GM12878 (cell line): ENCODE measurements at regions of chr22 and their contacts with region 1.

Region 1: DNA sequence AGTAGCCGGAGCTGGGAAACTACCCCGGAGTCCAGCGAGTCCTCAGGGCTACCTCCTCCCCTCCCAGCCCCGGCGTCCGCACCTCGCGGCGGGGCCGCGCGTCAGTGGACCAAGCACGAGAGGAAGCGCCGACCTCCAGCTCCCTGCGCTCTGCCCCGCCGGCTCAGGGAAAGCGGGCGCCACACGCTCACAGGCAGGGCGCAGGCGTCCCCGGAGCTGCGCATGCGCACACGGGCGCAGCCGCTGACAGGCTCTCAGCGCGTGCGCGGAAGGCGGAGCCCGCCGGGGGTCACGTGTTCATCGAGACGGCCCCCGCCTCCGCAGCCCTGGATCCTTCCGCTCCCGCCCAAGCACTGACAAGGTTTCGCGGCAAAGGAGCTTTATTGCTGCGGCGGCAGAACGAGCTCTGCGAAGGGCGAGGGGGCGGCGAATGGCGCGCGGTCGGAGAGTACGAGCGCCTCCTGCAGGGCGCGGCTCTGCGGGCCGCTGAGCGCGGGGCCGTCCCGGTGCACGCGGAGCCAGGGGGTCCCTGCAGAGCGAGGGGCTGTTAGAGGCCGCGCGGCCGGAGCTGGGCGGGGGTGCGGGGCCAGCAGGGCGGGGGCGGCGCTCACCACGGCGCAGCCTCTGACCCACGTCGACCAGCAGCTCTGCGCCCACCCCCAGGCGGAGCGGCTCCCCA is at the start of gene SCO2:
- DNase-seq: peak; percentile 89
- ATAC-seq: peak; percentile 54
- H3K4me3 ChIP-seq: peak within 1 kb of the TSS; percentile 74
- H3K27ac ChIP-seq: peak within 1 kb of the TSS; percentile 94
- H3K4me1 ChIP-seq: peaks cover 16% of the 10 kb centered on the region
- H3K27me3 ChIP-seq: no peaks in the 10 kb centered on the region
- CTCF ChIP-seq: peak; percentile 32 to 45 (median 42); a peak in 5 of 6 replicates
- EP300 ChIP-seq: no peak; a peak in 1 of 4 replicates
- POLR2A ChIP-seq: no peak
- RAD21 ChIP-seq: peak; percentile 45; the same call in 1 of the 2 replicates
- polyA plus RNA-seq, gene SCO2: 1.0 TPM in 1 of 2 experiments, not detected in the other

Region 2: DNA sequence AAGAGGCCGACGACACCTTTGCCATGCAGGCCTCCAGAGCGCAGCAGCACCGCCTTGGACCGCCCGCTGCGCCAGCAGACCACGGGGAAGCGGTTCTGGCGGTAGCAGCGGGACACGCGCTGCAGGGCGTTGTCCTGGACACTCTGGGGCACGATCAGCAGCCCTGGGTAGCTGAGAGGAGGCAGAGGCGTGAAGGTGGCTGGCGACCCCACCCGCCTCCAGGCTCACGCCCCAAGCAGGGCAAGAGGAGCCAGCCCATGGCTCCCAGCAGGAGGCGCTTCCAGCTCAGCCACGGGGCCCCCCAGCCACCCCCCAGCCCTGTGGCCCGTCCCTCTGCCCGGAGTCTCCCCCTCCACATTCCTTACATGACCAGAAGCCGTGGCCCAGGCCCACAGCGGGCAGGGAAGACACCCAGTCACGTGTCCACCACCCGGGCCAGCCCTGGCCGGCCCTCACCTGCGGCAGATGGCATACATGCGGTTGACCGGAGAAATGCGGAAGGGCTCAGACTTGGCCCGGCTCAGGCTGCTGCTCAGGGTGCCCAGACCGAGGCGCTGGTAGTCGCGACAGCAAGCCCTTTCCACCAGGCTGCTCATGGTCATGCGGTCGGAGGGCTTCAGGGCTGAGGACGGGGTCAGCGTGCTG is 65.9 kb before region 1 on chr22:
- CTCF ChIA-PET with region 1: no interaction called
- POLR2A ChIA-PET with region 1: no interaction called
- RAD21 ChIA-PET with region 1: no interaction called
- SMC1A ChIA-PET with region 1: no interaction called
- in situ Hi-C with region 1: no loop called
- intact Hi-C with region 1: no loop called
- DNase-seq: no peak
- ATAC-seq: peak; percentile 24; the same call in 1 of the 3 replicates
- H3K4me3 ChIP-seq: no peak overlapping the region
- H3K27ac ChIP-seq: no peak overlapping the region
- H3K4me1 ChIP-seq: no peaks in the 10 kb centered on the region
- H3K27me3 ChIP-seq: no peaks in the 10 kb centered on the region
- CTCF ChIP-seq: 0 out of 6 replicates have a peak, but pooled peaks of 1 of the 3 experiments have one; percentile 9
- EP300 ChIP-seq: no peak
- POLR2A ChIP-seq: peak; percentile 3
- RAD21 ChIP-seq: 0 out of 2 replicates have a peak, but pooled peaks have one; percentile 4

Region 3: DNA sequence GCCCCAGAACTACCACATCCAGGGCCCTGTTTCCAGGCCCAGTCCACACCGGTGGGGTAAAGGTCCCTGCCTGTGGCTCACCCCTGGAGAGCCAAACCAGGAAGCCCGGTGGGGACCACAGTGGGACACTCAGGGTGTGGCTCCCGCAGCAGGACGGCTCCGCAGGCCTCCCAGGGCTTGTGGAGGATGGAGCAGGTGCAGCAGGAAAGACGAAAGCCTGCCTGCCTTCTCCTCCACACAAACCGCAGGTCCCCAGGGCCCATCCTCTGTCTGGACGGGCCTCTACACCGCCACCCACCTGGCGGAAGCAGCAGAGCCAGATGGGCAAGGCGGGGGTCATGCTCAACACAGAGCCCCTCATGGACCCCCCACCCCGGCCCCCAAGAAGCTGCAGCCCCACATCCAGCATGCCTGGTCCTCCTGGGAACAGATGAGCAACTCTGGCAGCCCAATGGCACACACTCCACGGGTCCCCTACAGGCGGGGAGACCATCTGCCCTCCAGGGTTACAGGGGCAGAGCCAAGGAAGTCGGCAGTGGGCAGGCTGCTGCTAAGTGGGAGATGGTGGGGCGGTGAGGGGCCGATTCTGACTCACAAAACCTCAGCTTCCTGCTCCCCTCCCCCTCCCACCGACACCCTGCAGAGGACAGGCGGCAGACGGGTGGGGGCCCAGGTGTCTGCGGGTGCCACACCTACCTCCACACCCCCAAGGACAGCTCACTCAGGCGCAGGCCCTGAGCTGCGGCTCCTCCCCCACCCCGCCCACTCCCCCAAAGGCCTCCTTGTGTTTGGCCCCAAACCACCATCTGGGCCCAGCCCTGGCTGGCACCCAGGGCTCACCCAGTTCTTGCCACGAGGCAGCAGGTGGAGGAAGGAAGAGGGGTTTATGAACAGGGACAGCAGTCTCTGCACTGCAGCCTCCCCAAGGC is 55.9 kb before region 1 on chr22:
- CTCF ChIA-PET with region 1: interaction called, 14 read pairs
- POLR2A ChIA-PET with region 1: interaction called, 10 read pairs
- RAD21 ChIA-PET with region 1: interaction called, 8 read pairs
- SMC1A ChIA-PET with region 1: interaction called, 5 read pairs
- in situ Hi-C with region 1: no loop called
- intact Hi-C with region 1: no loop called
- DNase-seq: peak; percentile 87
- ATAC-seq: peak; percentile 81
- H3K4me3 ChIP-seq: peak overlapping the region; percentile 56
- H3K27ac ChIP-seq: peak overlapping the region; percentile 92
- H3K4me1 ChIP-seq: peaks cover 48% of the 10 kb centered on the region
- H3K27me3 ChIP-seq: no peaks in the 10 kb centered on the region
- CTCF ChIP-seq: peak in 1 of 3 experiments; percentile 13; a peak in 2 of 6 replicates
- EP300 ChIP-seq: peak; percentile 47 to 63; a peak in 3 of 4 replicates
- POLR2A ChIP-seq: peak; percentile 69
- RAD21 ChIP-seq: no peak

Region 4: DNA sequence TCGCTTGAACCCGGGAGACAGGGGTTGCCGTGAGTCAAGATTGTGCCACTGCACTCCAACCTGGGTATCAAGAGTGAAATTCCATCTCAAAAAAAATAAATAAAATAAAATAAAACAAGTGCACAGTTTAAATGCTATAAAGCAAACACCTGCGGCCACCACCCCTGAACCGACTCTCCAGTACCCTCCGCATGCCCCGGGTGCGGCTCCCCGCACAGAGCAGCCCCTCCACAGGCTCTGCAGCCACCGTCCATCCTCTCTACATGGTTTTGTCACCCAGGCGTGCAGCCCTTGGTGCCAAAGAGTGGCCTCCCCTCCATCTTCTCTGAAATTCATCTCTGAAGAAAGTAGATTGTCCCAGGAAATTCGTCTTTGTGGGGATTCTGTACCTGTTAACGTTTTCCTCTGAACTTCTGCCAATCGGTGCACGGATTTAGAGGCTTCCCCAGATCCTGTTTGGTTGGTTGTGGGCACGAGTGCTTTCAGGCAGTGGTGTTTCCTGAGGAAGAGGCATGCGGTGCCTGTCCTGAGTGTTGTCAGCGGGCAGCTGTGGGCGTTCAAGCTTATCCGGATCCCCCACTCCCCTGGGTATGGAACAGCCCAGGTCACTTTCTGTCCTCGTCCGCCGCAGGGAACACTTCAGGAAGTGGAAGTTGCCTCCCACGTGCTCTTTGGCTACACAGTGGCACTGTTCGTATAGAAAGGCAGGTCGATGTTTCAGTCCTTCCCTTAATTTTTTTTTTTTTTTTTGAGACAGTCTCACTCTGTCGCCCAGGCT is 34.8 kb before region 1 on chr22:
- CTCF ChIA-PET with region 1: no interaction called
- POLR2A ChIA-PET with region 1: no interaction called
- RAD21 ChIA-PET with region 1: no interaction called
- SMC1A ChIA-PET with region 1: no interaction called
- in situ Hi-C with region 1: no loop called
- intact Hi-C with region 1: no loop called
- DNase-seq: no peak
- ATAC-seq: peak; percentile 38
- H3K4me3 ChIP-seq: no peak overlapping the region
- H3K27ac ChIP-seq: no peak overlapping the region
- H3K4me1 ChIP-seq: peaks cover 5% of the 10 kb centered on the region
- H3K27me3 ChIP-seq: no peaks in the 10 kb centered on the region
- CTCF ChIP-seq: no peak
- EP300 ChIP-seq: no peak
- POLR2A ChIP-seq: no peak
- RAD21 ChIP-seq: no peak

Region 5: DNA sequence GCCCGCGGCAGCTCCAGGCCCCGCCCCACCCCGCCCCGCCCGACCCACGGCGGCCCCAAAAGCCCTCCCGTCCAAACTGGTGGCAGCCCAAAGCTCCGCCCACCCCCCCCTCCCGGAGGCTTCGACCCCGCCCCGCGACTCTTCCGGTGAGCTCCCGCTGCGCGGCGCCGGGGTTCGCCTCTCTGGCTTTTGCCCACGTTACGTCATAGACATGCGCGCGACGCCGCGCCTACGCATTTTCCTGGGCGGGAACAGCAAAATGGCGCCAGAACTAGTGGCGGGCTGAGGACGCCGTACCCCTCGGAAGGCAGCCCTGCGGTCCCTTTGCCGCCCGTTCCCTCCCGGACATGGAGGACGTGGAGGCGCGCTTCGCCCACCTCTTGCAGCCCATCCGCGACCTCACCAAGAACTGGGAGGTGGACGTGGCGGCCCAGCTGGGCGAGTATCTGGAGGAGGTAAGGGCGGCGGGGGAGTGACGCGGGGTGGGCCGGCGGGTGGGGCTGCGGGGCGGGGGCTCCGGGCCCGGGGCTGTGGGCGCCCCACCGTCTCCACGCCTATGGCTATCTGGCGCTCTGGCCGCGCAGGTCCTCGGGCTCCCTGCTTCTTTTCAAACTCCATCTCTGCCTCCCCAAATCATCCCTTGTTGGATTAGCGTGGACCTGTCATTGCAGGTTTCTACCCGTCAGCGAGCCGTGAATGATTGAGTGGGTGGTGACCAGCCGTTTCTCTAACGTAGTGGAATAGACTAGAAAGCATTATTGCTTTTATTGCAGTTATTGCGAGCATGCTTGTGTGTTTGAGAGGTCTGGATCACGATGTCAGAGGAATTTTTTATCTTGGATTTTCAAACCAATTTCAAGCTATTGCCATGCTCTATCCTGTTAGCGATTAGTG is 17.3 kb before region 1 on chr22 and contains the start of gene NCAPH2:
- CTCF ChIA-PET with region 1: interaction called, 38 read pairs
- POLR2A ChIA-PET with region 1: interaction called, 84 read pairs
- RAD21 ChIA-PET with region 1: interaction called, 64 read pairs
- SMC1A ChIA-PET with region 1: interaction called, 16 read pairs
- in situ Hi-C with region 1: no loop called
- intact Hi-C with region 1: no loop called
- DNase-seq: peak; percentile 83
- ATAC-seq: peak; percentile 69
- H3K4me3 ChIP-seq: peak within 1 kb of the TSS; percentile 100
- H3K27ac ChIP-seq: peak within 1 kb of the TSS; percentile 90
- H3K4me1 ChIP-seq: peaks cover 9% of the 10 kb centered on the region
- H3K27me3 ChIP-seq: no peaks in the 10 kb centered on the region
- CTCF ChIP-seq: peak in 1 of 3 experiments; percentile 33; a peak in 2 of 6 replicates
- EP300 ChIP-seq: no peak
- POLR2A ChIP-seq: peak; percentile 98
- RAD21 ChIP-seq: peak; percentile 16; the same call in 1 of the 2 replicates
- polyA plus RNA-seq, gene NCAPH2: 5.0 to 16.9 TPM

Region 6: GRCh38 chr22:50537765-50538164 is 12.2 kb after region 1 on chr22:
- CTCF ChIA-PET with region 1: interaction called, 37 read pairs
- POLR2A ChIA-PET with region 1: interaction called, 232 read pairs
- RAD21 ChIA-PET with region 1: interaction called, 106 read pairs
- SMC1A ChIA-PET with region 1: interaction called, 58 read pairs
- in situ Hi-C with region 1: no loop called
- intact Hi-C with region 1: no loop called
- DNase-seq: no peak
- ATAC-seq: no peak
- H3K4me3 ChIP-seq: peak overlapping the region; percentile 28; the same call in 1 of the 2 replicates
- H3K27ac ChIP-seq: peak overlapping the region; percentile 100
- H3K4me1 ChIP-seq: peaks cover 68% of the 10 kb centered on the region
- H3K27me3 ChIP-seq: no peaks in the 10 kb centered on the region
- CTCF ChIP-seq: no peak
- EP300 ChIP-seq: no peak
- POLR2A ChIP-seq: no peak
- RAD21 ChIP-seq: no peak

Region 7: DNA sequence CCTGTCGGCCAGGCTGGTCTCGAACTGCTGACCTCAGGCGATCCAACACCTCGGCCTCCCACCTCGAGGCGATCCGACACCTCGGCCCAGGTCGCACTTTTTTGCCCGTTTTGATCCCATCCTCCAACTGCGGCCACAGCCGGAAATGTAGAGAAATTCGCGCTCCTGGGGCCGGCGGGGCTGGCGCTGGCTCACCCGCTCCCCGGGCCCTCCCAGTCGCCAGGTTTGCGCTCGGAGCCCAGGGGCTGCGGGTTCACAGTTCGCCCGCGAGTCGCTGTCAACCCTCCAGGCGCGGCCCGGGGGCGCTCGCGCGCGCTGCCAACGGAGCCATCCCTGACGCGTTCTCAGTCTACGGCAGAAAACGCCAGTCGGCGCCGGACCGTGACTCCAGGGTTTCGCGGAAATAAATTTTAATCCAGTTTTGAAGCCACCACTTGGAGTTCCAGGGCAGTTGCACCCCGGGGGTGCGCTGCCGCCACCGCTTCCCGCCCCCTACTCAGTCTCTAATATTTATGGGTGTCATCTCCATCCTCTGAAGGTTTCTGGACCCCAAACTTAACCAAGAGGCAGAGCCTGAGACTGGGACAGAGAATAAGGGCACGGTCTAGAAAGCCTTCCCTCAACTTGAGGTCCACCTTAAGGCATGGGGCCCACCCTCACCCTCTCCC is 18.7 kb after region 1 on chr22:
- CTCF ChIA-PET with region 1: interaction called, 37 read pairs
- POLR2A ChIA-PET with region 1: interaction called, 232 read pairs
- RAD21 ChIA-PET with region 1: interaction called, 106 read pairs
- SMC1A ChIA-PET with region 1: interaction called, 58 read pairs
- in situ Hi-C with region 1: no loop called
- intact Hi-C with region 1: no loop called
- DNase-seq: no peak
- ATAC-seq: peak; percentile 43
- H3K4me3 ChIP-seq: no peak overlapping the region
- H3K27ac ChIP-seq: peak overlapping the region; percentile 45; the same call in 1 of the 2 replicates
- H3K4me1 ChIP-seq: peaks cover 46% of the 10 kb centered on the region
- H3K27me3 ChIP-seq: peaks cover 0 to 1% of the 10 kb centered on the region in 2 experiments; a peak in 1 of 4 replicates
- CTCF ChIP-seq: peak; percentile 62 to 76 (median 72)
- EP300 ChIP-seq: no peak
- POLR2A ChIP-seq: peak; percentile 38
- RAD21 ChIP-seq: peak; percentile 38; the same call in 1 of the 2 replicates

Region 8: GRCh38 chr22:50562523-50563412 is 37.2 kb after region 1 on chr22 and contains the start of gene SYCE3:
- CTCF ChIA-PET with region 1: interaction called, 21 read pairs
- POLR2A ChIA-PET with region 1: interaction called, 21 read pairs
- RAD21 ChIA-PET with region 1: interaction called, 13 read pairs
- SMC1A ChIA-PET with region 1: interaction called, 7 read pairs
- in situ Hi-C with region 1: no loop called
- intact Hi-C with region 1: loop called (anchors 5 kb)
- DNase-seq: peak; percentile 75
- ATAC-seq: peak; percentile 98
- H3K4me3 ChIP-seq: peak within 1 kb of the TSS; percentile 94
- H3K27ac ChIP-seq: no peak within 1 kb of the TSS
- H3K4me1 ChIP-seq: no peaks in the 10 kb centered on the region
- H3K27me3 ChIP-seq: peaks cover 0 to 1% of the 10 kb centered on the region in 2 experiments; a peak in 1 of 4 replicates
- CTCF ChIP-seq: peak; percentile 92 to 94 (median 92)
- EP300 ChIP-seq: no peak
- POLR2A ChIP-seq: peak; percentile 66
- RAD21 ChIP-seq: peak; percentile 70
- polyA plus RNA-seq, gene SYCE3: 0.76 to 0.91 TPM

Region 9: DNA sequence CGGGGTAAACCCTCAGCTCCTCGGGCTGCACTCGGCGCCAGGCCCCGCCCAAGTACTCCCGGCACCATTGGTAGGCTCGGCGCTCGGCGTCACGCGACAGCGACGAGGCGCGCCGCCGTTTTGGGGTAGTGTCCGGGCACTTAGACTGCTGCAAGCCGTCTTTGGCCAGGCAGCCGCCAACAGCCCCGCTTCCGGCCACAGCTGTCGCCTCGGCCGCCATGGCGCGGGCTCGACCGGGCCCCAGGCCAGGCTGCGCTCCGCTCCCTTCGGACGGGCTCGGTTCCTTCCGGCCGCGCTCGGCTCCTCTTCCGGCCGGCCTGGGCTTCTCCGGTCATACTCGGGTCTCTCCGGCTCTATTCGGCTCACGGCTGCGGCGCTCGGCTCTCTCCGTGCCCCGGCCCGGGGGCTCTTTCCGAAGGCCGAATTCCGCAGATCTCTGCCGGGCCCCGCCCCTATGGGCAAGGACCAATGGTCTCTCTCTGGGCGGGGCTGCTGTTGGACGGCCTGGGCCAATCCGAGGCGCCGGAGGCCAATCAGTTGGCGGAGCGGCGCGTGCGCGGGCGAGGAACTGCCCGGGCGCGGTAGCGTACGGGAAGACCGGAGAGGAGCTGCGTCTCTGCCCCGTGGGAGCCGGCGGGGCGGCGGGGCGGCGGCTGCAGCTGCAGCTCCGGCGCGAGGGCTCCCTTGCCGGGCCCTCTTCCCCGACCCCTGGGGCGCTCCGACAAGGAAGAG is 57.2 kb after region 1 on chr22 and contains the start of gene CHKB:
- CTCF ChIA-PET with region 1: no interaction called
- POLR2A ChIA-PET with region 1: interaction called, 3 read pairs
- RAD21 ChIA-PET with region 1: interaction called, 16 read pairs
- SMC1A ChIA-PET with region 1: interaction called, 8 read pairs
- in situ Hi-C with region 1: no loop called
- intact Hi-C with region 1: loop called (anchors 5 kb)
- DNase-seq: peak; percentile 80
- ATAC-seq: peak; percentile 97
- H3K4me3 ChIP-seq: peak within 1 kb of the TSS; percentile 90
- H3K27ac ChIP-seq: peak within 1 kb of the TSS; percentile 94
- H3K4me1 ChIP-seq: peaks cover 15% of the 10 kb centered on the region
- H3K27me3 ChIP-seq: no peaks in the 10 kb centered on the region
- CTCF ChIP-seq: no peak
- EP300 ChIP-seq: no peak
- POLR2A ChIP-seq: peak; percentile 86
- RAD21 ChIP-seq: no peak
- polyA plus RNA-seq, gene CHKB: 10.0 to 20.6 TPM